Activated naive CD4-positive, alpha-beta T cell treated with anti-CD3 and anti-CD28 coated beads for 36 hours (primary cell): ENCODE measurements at regions of chr4 and their contacts with region 1.

Region 1: DNA sequence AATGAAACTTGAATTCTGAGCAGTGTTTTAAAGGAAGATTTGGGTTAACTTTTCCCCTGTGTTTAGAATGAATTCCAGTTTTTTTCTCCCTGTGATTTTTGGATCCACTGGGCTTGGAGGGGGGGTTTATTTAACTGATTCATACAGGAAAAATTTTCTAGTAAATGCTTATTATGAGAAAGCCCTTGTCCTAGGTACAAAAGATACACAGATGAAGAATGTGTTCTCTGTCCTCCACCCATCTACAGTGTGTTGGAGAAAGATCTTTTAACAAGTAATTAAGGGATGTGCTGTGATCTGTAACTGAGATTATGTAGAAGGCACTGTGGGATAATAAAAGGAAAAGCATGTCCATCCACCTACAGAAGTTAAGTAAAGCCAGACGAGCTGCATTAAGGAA is 103.9 kb downstream of the STIM2 start:
- DNase-seq: no peak
- H3K4me3 Mint-ChIP-seq: no peak overlapping the region
- H3K27ac Mint-ChIP-seq: no peak overlapping the region
- H3K4me1 Mint-ChIP-seq: peaks cover 46% of the 10 kb centered on the region
- H3K27me3 Mint-ChIP-seq: no peaks in the 10 kb centered on the region

Region 2: GRCh38 chr4:26873391-26874026 is 91.0 kb before region 1 on chr4:
- CTCF ChIA-PET with region 1: no interaction called
- intact Hi-C with region 1: loop called (anchors 1 kb)
- DNase-seq: peak; percentile 89
- H3K4me3 Mint-ChIP-seq: no peak overlapping the region
- H3K27ac Mint-ChIP-seq: peak overlapping the region; percentile 69
- H3K4me1 Mint-ChIP-seq: peaks cover 80% of the 10 kb centered on the region
- H3K27me3 Mint-ChIP-seq: no peaks in the 10 kb centered on the region

Region 3: GRCh38 chr4:26885912-26886274 is 78.6 kb before region 1 on chr4:
- CTCF ChIA-PET with region 1: interaction called, 4 read pairs
- intact Hi-C with region 1: loop called (anchors 1 kb)
- DNase-seq: peak; percentile 42
- H3K4me3 Mint-ChIP-seq: peak overlapping the region; percentile 58
- H3K27ac Mint-ChIP-seq: peak overlapping the region; percentile 88
- H3K4me1 Mint-ChIP-seq: peaks cover 67% of the 10 kb centered on the region
- H3K27me3 Mint-ChIP-seq: no peaks in the 10 kb centered on the region

Region 4: GRCh38 chr4:26985873-26986272 is 21.4 kb after region 1 on chr4:
- CTCF ChIA-PET with region 1: interaction called, 3 read pairs
- intact Hi-C with region 1: loop called (anchors 2 kb)
- DNase-seq: peak; percentile 56
- H3K4me3 Mint-ChIP-seq: no peak overlapping the region
- H3K27ac Mint-ChIP-seq: no peak overlapping the region
- H3K4me1 Mint-ChIP-seq: peaks cover 52% of the 10 kb centered on the region
- H3K27me3 Mint-ChIP-seq: no peaks in the 10 kb centered on the region